Common myeloid progenitor, CD34-positive (primary cell): ENCODE measurements at regions of chr18 and their contacts with region 1.

Region 1: GRCh38 chr18:6543330-6543908 is 128.7 kb upstream of the L3MBTL4 start:
- DNase-seq: peak; percentile 10 to 38 (median 38)
- H3K4me3 ChIP-seq: no peak overlapping the region
- H3K27ac ChIP-seq: no peak overlapping the region
- H3K4me1 ChIP-seq: no peaks in the 10 kb centered on the region
- H3K27me3 ChIP-seq: no peaks in the 10 kb centered on the region

Region 2: GRCh38 chr18:6557053-6557779 is 13.8 kb after region 1 on chr18:
- CTCF ChIA-PET with region 1: no interaction called
- POLR2A ChIA-PET with region 1: no interaction called
- DNase-seq: no peak
- H3K4me3 ChIP-seq: no peak overlapping the region
- H3K27ac ChIP-seq: no peak overlapping the region
- H3K4me1 ChIP-seq: no peaks in the 10 kb centered on the region
- H3K27me3 ChIP-seq: peaks cover 0 to 24% (median 7%) of the 10 kb centered on the region in 5 experiments

Region 3: DNA sequence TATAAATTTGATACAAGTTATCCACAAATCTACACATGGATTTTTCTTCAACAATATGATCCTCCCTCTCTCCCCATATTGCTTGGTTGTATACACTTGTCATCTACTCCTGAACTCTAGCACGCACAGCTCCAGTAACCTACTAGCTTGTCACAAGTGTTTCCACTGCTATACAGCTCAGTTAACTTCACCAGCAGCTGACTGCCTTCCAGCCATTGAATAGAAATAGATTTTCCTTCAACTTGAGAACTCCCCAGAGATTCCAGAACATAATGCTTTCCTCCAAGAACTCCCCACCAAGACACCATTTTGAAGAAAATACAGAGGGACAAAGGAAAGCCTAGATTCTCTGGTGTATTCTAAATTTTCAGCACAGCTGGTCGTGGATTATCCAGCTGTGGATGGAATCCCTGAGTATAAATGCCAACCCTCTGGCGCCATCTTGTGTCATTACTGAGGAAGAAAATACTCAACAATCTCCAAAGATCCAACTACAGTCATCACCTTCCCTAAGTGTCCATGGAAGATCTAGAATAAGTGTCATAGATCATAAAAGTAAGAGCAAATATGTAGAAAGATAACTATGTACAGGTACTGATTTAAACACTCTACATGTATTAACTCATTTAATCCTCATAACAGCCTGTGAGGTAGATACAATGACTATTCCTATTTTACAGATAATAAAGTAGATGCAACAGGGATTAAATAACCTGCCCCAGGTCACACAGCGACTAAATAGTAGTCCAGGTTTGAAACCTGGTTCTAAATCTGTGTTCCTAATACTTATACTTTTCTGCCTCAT is 342.8 kb after region 1 on chr18:
- CTCF ChIA-PET with region 1: interaction called, 30 read pairs
- POLR2A ChIA-PET with region 1: no interaction called
- DNase-seq: peak; percentile 34 to 63 (median 52)
- H3K4me3 ChIP-seq: no peak overlapping the region
- H3K27ac ChIP-seq: no peak overlapping the region
- H3K4me1 ChIP-seq: no peaks in the 10 kb centered on the region
- H3K27me3 ChIP-seq: peaks cover 0 to 3% (median 0%) of the 10 kb centered on the region in 5 experiments